Ascending aorta (tissue), 2 donors: ENCODE measurements at regions of chr3 and their contacts with region 1.

Region 1: DNA sequence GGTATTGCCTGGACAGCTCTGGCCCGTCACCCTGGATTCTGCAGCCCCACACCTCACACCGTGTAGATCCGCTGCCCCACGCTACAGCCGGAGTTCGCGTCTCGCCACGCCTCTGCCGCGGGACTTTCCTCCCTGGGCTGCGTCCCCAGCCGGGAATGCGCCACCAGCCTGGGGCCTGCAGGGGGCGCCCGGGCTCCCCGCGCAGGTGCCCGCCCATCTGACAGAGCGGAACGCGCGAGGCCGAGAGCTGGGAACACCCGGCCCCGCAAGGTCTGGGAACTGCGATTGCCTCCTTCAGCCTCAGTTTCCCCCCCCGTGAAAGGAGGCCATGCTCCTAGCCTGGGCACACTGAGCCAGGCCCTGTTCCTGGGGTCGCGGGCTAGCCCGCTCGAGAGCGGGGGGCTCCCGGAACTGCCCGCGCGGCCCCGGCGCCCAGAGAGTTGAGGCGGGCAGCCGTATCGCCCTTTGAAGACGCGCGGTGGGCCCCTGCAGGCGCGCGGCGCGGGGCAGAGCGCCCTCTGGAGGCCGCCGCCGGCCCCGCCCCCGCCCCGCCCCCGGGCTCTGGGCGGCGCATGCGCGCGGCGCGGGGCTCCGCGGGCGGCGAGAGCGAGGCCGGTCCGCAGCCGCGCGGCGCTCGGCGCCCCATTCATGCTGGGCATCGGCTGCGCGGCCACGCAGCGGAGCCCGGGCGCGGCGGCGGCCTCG is at the start of gene PLXNA1:
- DNase-seq: peak; percentile 35 to 91
- H3K4me3 ChIP-seq: peak within 1 kb of the TSS; percentile 88 to 89
- H3K27ac ChIP-seq: peak within 1 kb of the TSS; percentile 77 to 84
- H3K4me1 ChIP-seq: peaks cover 11 to 38% of the 10 kb centered on the region in 2 donors
- H3K27me3 ChIP-seq: no peaks in the 10 kb centered on the region
- CTCF ChIP-seq: peak; percentile 90 to 98 (median 95)
- total RNA-seq, gene PLXNA1: 79.8 TPM

Region 2: DNA sequence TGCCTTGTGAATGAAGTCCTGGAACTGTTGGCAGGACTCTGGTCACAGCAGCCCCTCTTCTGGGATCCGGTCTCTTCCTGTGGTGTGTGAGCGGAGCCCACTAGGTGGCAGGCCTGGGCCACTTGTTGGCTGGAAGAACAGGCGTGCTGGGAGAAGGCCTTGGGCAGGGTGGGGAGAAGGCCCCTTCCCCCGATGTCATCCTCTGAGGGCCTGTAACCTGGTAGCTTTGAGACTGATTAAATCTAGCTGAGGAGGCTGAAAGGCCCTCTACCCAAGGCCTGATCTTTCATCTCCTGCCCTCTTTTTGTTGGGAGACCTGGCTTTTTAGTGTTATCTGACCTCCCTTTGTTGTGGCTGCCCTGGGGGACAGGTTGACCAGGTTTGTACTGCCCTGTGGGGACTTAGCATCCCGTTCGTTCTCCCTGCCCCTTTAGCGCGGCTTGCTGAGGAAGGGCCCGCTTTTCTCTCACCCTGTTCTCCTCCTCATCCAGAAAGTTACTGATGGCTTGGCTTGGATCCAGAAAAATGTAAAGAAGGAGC is 230.2 kb before region 1 on chr3:
- intact Hi-C with region 1: loop called (anchors 1 kb)
- DNase-seq: peak; percentile 26 to 86
- H3K4me3 ChIP-seq: no peak overlapping the region
- H3K27ac ChIP-seq: no peak overlapping the region
- H3K4me1 ChIP-seq: peaks cover 0 to 16% of the 10 kb centered on the region in 2 donors
- H3K27me3 ChIP-seq: no peaks in the 10 kb centered on the region
- CTCF ChIP-seq: peak; percentile 79 to 87 (median 86)

Region 3: GRCh38 chr3:127002195-127003174 is 19.9 kb after region 1 on chr3:
- intact Hi-C with region 1: loop called (anchors 1 kb)
- DNase-seq: peak; percentile 38 to 95
- H3K4me3 ChIP-seq: peak overlapping the region in 1 of 2 donors; percentile 38
- H3K27ac ChIP-seq: peak overlapping the region; percentile 85 to 95
- H3K4me1 ChIP-seq: peaks cover 26 to 70% of the 10 kb centered on the region in 2 donors
- H3K27me3 ChIP-seq: no peaks in the 10 kb centered on the region
- CTCF ChIP-seq: peak; percentile 8 to 61 (median 52)

Region 4: DNA sequence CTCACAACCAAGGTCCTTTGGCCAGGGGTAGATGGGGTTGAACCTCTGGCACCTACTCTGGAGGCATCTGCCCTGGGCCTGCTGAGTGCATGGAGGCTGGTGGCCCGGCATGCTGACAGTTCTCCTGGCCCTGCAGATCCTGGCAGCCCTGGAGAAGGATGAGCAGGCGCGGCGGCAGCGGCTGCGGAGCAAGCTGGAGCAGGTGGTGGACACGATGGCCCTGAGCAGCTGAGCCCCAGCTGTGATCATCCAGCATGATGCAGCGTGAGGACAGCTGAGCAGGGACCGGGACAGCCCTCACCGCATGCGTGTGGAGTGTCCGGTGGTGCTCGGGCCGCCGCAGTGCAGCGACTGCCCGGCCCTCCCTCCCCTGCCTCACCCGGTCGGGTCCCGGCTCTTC is 51.2 kb after region 1 on chr3:
- intact Hi-C with region 1: no loop called
- DNase-seq: no peak
- H3K4me3 ChIP-seq: no peak overlapping the region
- H3K27ac ChIP-seq: peak overlapping the region in 1 of 2 donors; percentile 83
- H3K4me1 ChIP-seq: peaks cover 0 to 4% of the 10 kb centered on the region in 2 donors
- H3K27me3 ChIP-seq: no peaks in the 10 kb centered on the region
- CTCF ChIP-seq: no peak

Region 5: GRCh38 chr3:127044996-127045715 is 62.5 kb after region 1 on chr3:
- intact Hi-C with region 1: loop called (anchors 2 kb)
- DNase-seq: no peak
- H3K4me3 ChIP-seq: no peak overlapping the region
- H3K27ac ChIP-seq: peak overlapping the region; percentile 62 to 75
- H3K4me1 ChIP-seq: peaks cover 15 to 24% of the 10 kb centered on the region in 2 donors
- H3K27me3 ChIP-seq: no peaks in the 10 kb centered on the region
- CTCF ChIP-seq: no peak

Region 6: GRCh38 chr3:127074728-127075360 is 92.2 kb after region 1 on chr3:
- intact Hi-C with region 1: no loop called
- DNase-seq: peak in 1 of 2 donors; percentile 76
- H3K4me3 ChIP-seq: no peak overlapping the region
- H3K27ac ChIP-seq: peak overlapping the region; percentile 54 to 62
- H3K4me1 ChIP-seq: peaks cover 9 to 10% of the 10 kb centered on the region in 2 donors
- H3K27me3 ChIP-seq: no peaks in the 10 kb centered on the region
- CTCF ChIP-seq: no peak

Region 7: DNA sequence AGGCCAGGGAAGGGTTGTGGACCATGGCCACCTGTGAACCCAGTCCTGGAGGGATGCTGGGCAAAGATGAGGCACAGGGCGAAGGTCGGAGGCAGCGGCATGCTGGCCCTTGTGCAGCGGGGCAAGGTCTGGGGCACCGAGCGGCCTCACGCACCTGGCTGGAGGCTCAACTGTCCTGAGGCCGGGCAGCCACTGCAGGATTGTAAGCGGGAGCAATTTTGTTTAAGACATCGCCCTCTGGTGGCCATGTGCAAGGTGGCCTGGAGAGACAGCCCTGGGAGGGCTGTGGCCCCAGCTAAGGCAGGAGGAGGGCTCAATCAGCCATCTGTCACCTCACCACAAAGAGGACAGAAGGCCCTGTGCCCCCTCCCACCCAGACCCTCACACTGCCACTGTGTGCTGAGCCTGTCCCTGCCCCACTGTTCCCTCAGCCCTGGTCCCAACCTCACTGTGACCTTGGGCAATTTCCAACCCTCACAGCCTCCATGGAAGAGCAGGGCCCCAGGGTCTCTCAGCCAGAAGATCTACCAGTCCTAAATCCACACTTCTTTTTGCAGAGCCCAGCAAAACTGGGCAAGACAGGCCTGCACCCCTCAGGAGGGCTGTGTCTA is 561.7 kb after region 1 on chr3:
- intact Hi-C with region 1: loop called (anchors 10 kb)
- DNase-seq: peak in 1 of 2 donors; percentile 85
- H3K4me3 ChIP-seq: no peak overlapping the region
- H3K27ac ChIP-seq: no peak overlapping the region
- H3K4me1 ChIP-seq: peaks cover 0 to 19% of the 10 kb centered on the region in 2 donors
- H3K27me3 ChIP-seq: no peaks in the 10 kb centered on the region
- CTCF ChIP-seq: peak; percentile 55 to 85 (median 67)